ENCODE measurements at regions of chr18 and their contacts with region 1.

Region 1: DNA sequence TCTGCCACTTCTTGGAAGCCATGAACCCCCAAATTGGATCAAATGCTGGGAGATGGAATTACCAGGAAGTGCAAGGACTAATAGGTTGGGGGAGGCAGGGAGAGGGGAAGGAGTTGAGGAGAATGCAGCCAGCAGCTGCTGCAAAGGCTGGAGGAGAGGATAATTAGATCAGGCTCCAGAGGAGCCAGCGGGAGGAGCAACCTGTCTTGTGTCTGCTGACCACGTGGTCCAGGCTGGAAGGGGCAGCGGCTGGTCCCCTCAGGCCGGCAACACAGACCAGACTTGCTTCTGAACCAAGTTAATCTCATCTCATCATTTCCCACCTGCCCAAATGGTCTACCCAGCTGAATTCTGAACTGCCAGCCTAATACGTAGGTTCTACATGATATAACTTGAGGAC is 68.3 kb downstream of the MRO start:
- DNase-seq: no peak
- H3K4me3 ChIP-seq: no peak overlapping the region
- H3K27ac ChIP-seq: no peak overlapping the region
- H3K27me3 ChIP-seq: peaks cover 0 to 10% (median 0%) of the 10 kb centered on the region in 45 donors
- CTCF ChIP-seq: no peak

Region 2: GRCh38 chr18:50649821-50650220 is 101.7 kb before region 1 on chr18:
- intact Hi-C with region 1: no loop called
- DNase-seq: peak in 4 of 10 donors; percentile 62 to 67 (median 64)
- H3K4me3 ChIP-seq: no peak overlapping the region
- H3K27ac ChIP-seq: peak overlapping the region in 50 of 59 donors; percentile 5 to 88 (median 70)
- H3K27me3 ChIP-seq: no peaks in the 10 kb centered on the region
- CTCF ChIP-seq: no peak

Region 3: GRCh38 chr18:50928551-50928950 is 177.1 kb after region 1 on chr18:
- intact Hi-C with region 1: no loop called
- DNase-seq: no peak
- H3K4me3 ChIP-seq: no peak overlapping the region
- H3K27ac ChIP-seq: no peak overlapping the region
- H3K27me3 ChIP-seq: no peaks in the 10 kb centered on the region
- CTCF ChIP-seq: no peak

Region 4: GRCh38 chr18:52160652-52161051 is 1409.2 kb after region 1 on chr18:
- intact Hi-C with region 1: loop called in 1 of 2 experiments (anchors 5 kb)
- DNase-seq: no peak
- H3K4me3 ChIP-seq: no peak overlapping the region
- H3K27ac ChIP-seq: no peak overlapping the region
- H3K27me3 ChIP-seq: no peaks in the 10 kb centered on the region
- CTCF ChIP-seq: no peak